ENCODE measurements at regions of chr15 and their contacts with region 1.

Region 1: GRCh38 chr15:43510200-43511011 is 7.0 kb upstream of the MAP1A start:
- DNase-seq: peak; percentile 96 to 97
- ATAC-seq: peak; percentile 83 to 85
- H3K4me3 ChIP-seq: peak overlapping the region; percentile 75 to 90 (median 78)
- H3K27ac ChIP-seq: peak overlapping the region; percentile 84 to 93 (median 92)
- H3K4me1 ChIP-seq: peaks cover 38 to 41% of the 10 kb centered on the region in 2 donors
- H3K27me3 ChIP-seq: no peaks in the 10 kb centered on the region
- CTCF ChIP-seq: peak in 2 of 5 experiments; percentile 38 to 53
- POLR2A ChIP-seq: peak; percentile 73 to 80

Region 2: DNA sequence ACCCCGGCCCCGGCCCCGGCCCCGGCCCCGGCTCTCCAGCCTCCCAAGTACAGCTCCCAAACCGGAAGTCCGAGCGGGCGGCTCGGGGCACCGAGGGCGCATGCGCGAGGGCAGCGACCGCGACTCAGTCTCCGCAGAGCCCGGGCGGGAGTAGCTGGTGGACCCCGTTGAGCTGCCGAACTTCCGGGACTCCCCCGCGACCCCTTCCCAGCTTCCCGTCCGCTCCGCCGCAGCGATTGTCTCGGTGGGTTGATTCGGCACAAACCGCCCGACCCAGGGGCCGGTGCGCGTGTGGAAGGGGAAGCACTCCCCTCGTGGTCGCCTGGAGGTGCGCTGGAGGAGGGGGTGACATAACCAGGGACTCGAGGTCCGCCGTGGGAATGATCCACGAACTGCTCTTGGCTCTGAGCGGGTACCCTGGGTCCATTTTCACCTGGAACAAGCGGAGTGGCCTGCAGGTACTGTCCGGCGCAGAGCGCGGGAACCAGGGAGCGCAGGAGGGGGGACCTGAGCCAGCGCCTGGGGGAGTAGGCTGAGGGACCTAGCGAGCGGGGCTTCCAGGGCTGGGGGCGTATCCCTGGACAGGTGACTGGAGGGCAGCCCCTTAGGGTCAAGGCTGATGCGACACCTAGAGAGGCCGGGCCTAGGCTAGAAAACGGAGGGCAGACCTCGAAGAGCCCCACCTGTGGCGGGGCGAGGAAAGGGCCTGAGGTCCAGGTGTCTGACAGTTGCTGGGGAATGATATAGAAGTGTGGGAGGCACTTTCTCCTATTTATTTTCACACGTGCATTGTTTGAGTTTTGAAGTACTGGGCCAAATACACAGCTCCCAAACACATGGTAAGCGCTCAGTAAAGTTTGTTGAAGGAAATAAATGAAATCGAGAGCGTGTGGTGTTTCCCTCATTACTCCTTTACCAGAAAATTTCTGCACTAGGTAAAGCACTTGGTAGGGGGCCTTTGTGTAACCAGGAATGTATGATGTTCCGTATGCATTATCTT is 139.1 kb before region 1 on chr15 and contains the starts of genes TUBGCP4 and ZSCAN29:
- in situ Hi-C with region 1: no loop called
- intact Hi-C with region 1: loop called (anchors 5 kb)
- DNase-seq: peak; percentile 52 to 77
- ATAC-seq: peak; percentile 94 to 95
- H3K4me3 ChIP-seq: peak within 1 kb of the TSS; percentile 80 to 97 (median 84)
- H3K27ac ChIP-seq: peak within 1 kb of the TSS; percentile 81 to 87 (median 85)
- H3K4me1 ChIP-seq: peaks cover 26 to 29% of the 10 kb centered on the region in 2 donors
- H3K27me3 ChIP-seq: no peaks in the 10 kb centered on the region
- CTCF ChIP-seq: peak in 4 of 5 experiments; percentile 7 to 60 (median 29)
- POLR2A ChIP-seq: peak in 1 of 2 donors; percentile 40
- total RNA-seq, gene TUBGCP4: 13.6 to 16.1 (median 14.7) TPM
- total RNA-seq, gene ZSCAN29: 20.7 to 42.2 (median 25.1) TPM

Region 3: GRCh38 chr15:43440721-43441281 is 69.6 kb before region 1 on chr15:
- in situ Hi-C with region 1: no loop called
- intact Hi-C with region 1: loop called (anchors 1 kb)
- DNase-seq: peak; percentile 56 to 58
- ATAC-seq: peak; percentile 100
- H3K4me3 ChIP-seq: no peak overlapping the region
- H3K27ac ChIP-seq: peak overlapping the region; percentile 60 to 77 (median 72)
- H3K4me1 ChIP-seq: peaks cover 11% of the 10 kb centered on the region in 2 donors
- H3K27me3 ChIP-seq: no peaks in the 10 kb centered on the region
- CTCF ChIP-seq: peak; percentile 37 to 60 (median 47)
- POLR2A ChIP-seq: no peak

Region 4: DNA sequence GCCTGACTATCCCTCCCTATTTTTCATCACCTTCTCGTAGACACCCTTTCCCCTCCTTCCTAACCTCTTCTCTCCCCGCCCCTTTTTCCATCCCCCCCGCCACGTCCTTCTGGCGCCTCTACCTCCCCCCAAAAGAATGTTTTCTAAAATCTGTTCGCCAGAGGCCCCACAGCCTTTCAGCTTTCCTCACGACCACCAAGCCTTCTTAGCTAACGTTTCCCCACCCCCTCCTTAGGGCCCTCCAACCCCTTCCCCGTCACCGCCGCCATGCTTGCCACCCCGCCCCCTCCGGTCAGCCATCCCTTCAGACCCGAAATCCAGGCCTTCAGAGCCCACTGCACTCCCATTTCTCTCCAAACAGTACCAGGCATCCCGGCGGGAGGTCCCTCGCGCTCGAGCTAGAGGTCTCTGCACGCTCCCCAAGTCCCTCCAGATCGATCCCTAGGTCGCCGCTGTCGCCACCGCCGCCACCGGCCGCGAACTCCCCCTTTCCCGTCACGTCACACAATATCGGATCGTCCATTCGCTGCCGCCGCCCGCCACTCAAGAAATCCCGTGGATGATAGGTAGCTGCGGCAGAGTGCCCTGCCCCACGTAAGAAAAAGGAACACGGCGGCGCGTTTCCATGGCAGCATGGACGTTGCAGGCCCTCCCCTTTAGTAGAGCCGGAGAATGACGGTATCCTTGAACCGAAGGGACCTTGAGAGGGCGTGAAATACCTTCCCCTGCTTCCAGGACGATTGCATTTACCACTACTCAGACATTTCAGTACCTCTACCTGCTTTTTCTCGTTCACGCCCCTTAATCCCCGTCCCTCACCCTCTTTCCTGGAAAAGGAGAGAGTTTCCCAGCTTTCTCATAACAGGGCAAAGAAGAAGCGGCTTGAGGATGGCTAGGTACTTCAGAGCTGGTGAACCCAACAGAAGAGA is 17.5 kb before region 1 on chr15 and contains the start of gene TP53BP1:
- in situ Hi-C with region 1: no loop called
- intact Hi-C with region 1: loop called (anchors 1 kb)
- DNase-seq: peak; percentile 96
- ATAC-seq: peak; percentile 98 to 99
- H3K4me3 ChIP-seq: peak within 1 kb of the TSS; percentile 85 to 99 (median 92)
- H3K27ac ChIP-seq: peak within 1 kb of the TSS; percentile 79 to 86 (median 84)
- H3K4me1 ChIP-seq: peaks cover 10 to 11% of the 10 kb centered on the region in 2 donors
- H3K27me3 ChIP-seq: no peaks in the 10 kb centered on the region
- CTCF ChIP-seq: no peak
- POLR2A ChIP-seq: no peak
- total RNA-seq, gene TP53BP1: 9.0 to 17.0 (median 13.3) TPM

Measured in gastrocnemius medialis (tissue), 4 donors.